ENCODE measurements at regions of chr6 and their contacts with region 1.

Region 1: GRCh38 chr6:21664314-21665109 is 71.0 kb downstream of the SOX4 start:
- DNase-seq: no peak
- H3K4me3 ChIP-seq: peak overlapping the region; percentile 28
- H3K27me3 ChIP-seq: peaks cover 41% of the 10 kb centered on the region
- CTCF ChIP-seq: no peak

Region 2: GRCh38 chr6:21270636-21271201 is 393.8 kb before region 1 on chr6:
- CTCF ChIA-PET with region 1: no interaction called
- POLR2A ChIA-PET with region 1: no interaction called
- DNase-seq: no peak
- H3K4me3 ChIP-seq: no peak overlapping the region
- H3K27me3 ChIP-seq: no peaks in the 10 kb centered on the region
- CTCF ChIP-seq: no peak

Region 3: GRCh38 chr6:21653905-21654304 is 10.6 kb before region 1 on chr6:
- CTCF ChIA-PET with region 1: interaction called, 3 read pairs
- POLR2A ChIA-PET with region 1: interaction called, 23 read pairs
- DNase-seq: no peak
- H3K4me3 ChIP-seq: no peak overlapping the region
- H3K27me3 ChIP-seq: no peaks in the 10 kb centered on the region
- CTCF ChIP-seq: no peak